K562 (cell line): ENCODE measurements at regions of chr6 and their contacts with region 1.

Region 1: GRCh38 chr6:135423649-135424128 is 73.9 kb downstream of the AHI1 start:
- DNase-seq: peak; percentile 29 to 72 (median 46)
- ATAC-seq: peak; percentile 87
- H3K4me3 ChIP-seq: no peak overlapping the region
- H3K27ac ChIP-seq: peak overlapping the region; percentile 39; the same call in 2 of the 3 replicates
- H3K4me1 ChIP-seq: peaks cover 0 to 29% of the 10 kb centered on the region in 2 experiments; a peak in 3 of 5 replicates
- H3K27me3 ChIP-seq: no peaks in the 10 kb centered on the region
- CTCF ChIP-seq: peak; percentile 46 to 85 (median 68); a peak in 5 of 6 replicates
- EP300 ChIP-seq: no peak
- POLR2A ChIP-seq: no peak
- RAD21 ChIP-seq: peak; percentile 87 to 94

Region 2: GRCh38 chr6:135062735-135063134 is 361.0 kb before region 1 on chr6:
- CTCF ChIA-PET with region 1: no interaction called
- POLR2A ChIA-PET with region 1: no interaction called
- in situ Hi-C with region 1: no loop called
- intact Hi-C with region 1: loop called (anchors 5 kb)
- DNase-seq: peak in 2 of 4 experiments; percentile 30 to 55
- ATAC-seq: peak; percentile 87
- H3K4me3 ChIP-seq: no peak overlapping the region
- H3K27ac ChIP-seq: no peak overlapping the region
- H3K4me1 ChIP-seq: peaks cover 0 to 3% of the 10 kb centered on the region in 2 experiments; a peak in 1 of 5 replicates
- H3K27me3 ChIP-seq: no peaks in the 10 kb centered on the region
- CTCF ChIP-seq: peak; percentile 33 to 58 (median 36); a peak in 3 of 6 replicates
- EP300 ChIP-seq: no peak
- POLR2A ChIP-seq: no peak
- RAD21 ChIP-seq: peak; percentile 67 to 77

Region 3: GRCh38 chr6:135183532-135184440 is 239.9 kb before region 1 on chr6:
- CTCF ChIA-PET with region 1: interaction called, 3 read pairs
- POLR2A ChIA-PET with region 1: interaction called, 4 read pairs
- in situ Hi-C with region 1: loop called (anchors 10 kb)
- intact Hi-C with region 1: loop called (anchors 2 kb)
- DNase-seq: peak; percentile 66 to 96 (median 76)
- ATAC-seq: peak; percentile 81
- H3K4me3 ChIP-seq: peak overlapping the region; percentile 71
- H3K27ac ChIP-seq: peak overlapping the region; percentile 73
- H3K4me1 ChIP-seq: peaks cover 23 to 26% of the 10 kb centered on the region in 2 experiments
- H3K27me3 ChIP-seq: no peaks in the 10 kb centered on the region
- CTCF ChIP-seq: peak; percentile 87 to 92 (median 92)
- EP300 ChIP-seq: peak; percentile 10
- POLR2A ChIP-seq: no peak
- RAD21 ChIP-seq: peak; percentile 85 to 87

Region 4: GRCh38 chr6:135280375-135281136 is 143.1 kb before region 1 on chr6:
- CTCF ChIA-PET with region 1: no interaction called
- POLR2A ChIA-PET with region 1: no interaction called
- in situ Hi-C with region 1: no loop called
- intact Hi-C with region 1: loop called (anchors 2 kb)
- DNase-seq: peak in 2 of 4 experiments; percentile 33 to 62
- ATAC-seq: peak; percentile 71
- H3K4me3 ChIP-seq: no peak overlapping the region
- H3K27ac ChIP-seq: peak overlapping the region; percentile 29; the same call in 2 of the 3 replicates
- H3K4me1 ChIP-seq: peaks cover 4 to 35% of the 10 kb centered on the region in 2 experiments; a peak in 4 of 5 replicates
- H3K27me3 ChIP-seq: no peaks in the 10 kb centered on the region
- CTCF ChIP-seq: no peak
- EP300 ChIP-seq: peak; percentile 50
- POLR2A ChIP-seq: no peak
- RAD21 ChIP-seq: no peak

Region 5: GRCh38 chr6:135451693-135452092 is 28.0 kb after region 1 on chr6:
- CTCF ChIA-PET with region 1: no interaction called
- POLR2A ChIA-PET with region 1: no interaction called
- in situ Hi-C with region 1: no loop called
- intact Hi-C with region 1: loop called (anchors 1 kb)
- DNase-seq: peak in 3 of 4 experiments; percentile 20 to 47 (median 31)
- ATAC-seq: peak; percentile 50
- H3K4me3 ChIP-seq: no peak overlapping the region
- H3K27ac ChIP-seq: no peak overlapping the region
- H3K4me1 ChIP-seq: no peaks in the 10 kb centered on the region
- H3K27me3 ChIP-seq: no peaks in the 10 kb centered on the region
- CTCF ChIP-seq: peak; percentile 55 to 81 (median 62); a peak in 5 of 6 replicates
- EP300 ChIP-seq: no peak
- POLR2A ChIP-seq: no peak
- RAD21 ChIP-seq: peak; percentile 50 to 66